ENCODE measurements at regions of chr3 and their contacts with region 1.

Region 1: DNA sequence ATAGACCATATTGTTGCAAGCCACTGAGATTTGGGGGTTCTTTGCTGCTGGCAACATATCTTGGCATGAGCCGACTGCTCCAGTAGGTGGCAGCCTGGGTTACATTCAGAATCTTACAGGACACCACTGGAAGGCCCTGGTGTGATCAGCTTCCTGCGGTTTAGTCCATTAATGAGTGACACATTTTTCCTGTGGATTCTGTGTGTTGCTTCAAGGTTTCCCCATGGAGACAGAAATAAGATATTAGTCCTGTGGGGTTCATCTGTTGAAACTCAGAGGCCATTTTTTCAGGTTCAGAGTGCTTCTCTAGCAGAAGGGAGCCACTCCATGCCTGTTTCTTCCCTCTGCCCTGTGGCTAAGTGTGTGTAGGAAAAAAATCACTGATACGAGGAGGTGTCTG is 116.2 kb downstream of the MFSD1 start:
- DNase-seq: peak; percentile 41 to 67
- H3K4me3 ChIP-seq: no peak overlapping the region
- H3K27ac ChIP-seq: no peak overlapping the region
- H3K4me1 ChIP-seq: no peaks in the 10 kb centered on the region
- H3K27me3 ChIP-seq: no peaks in the 10 kb centered on the region
- CTCF ChIP-seq: peak; percentile 82

Region 2: DNA sequence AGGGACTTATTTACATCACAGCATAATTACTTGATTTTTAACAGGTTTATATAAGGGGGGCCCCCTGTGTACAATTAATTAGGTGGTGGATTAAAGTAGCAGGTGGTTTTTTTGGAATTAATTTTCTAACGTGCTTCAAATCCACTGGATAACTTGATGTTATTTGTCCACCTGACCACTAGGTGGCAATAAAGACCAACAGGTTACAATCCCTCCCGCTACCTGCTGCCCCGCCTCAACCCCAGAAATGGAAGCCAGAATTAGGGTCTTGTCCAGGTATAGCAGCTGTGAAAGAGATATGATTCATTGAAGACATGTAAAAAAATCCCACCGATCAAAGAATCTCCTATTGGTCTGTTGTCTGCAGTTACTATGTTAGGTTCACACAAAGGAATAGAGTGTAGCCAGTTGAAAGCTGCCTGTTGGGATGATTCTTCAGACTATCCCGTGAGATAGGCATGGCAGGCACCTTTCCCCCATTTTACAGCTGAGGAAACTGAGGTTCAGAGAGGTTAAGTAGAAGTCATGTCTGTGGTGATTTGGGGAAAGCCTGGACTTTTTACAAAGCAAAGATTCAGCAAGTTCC is 72.2 kb before region 1 on chr3:
- CTCF ChIA-PET with region 1: no interaction called
- POLR2A ChIA-PET with region 1: no interaction called
- intact Hi-C with region 1: loop called (anchors 1 kb)
- DNase-seq: peak; percentile 43 to 49
- H3K4me3 ChIP-seq: no peak overlapping the region
- H3K27ac ChIP-seq: no peak overlapping the region
- H3K4me1 ChIP-seq: no peaks in the 10 kb centered on the region
- H3K27me3 ChIP-seq: no peaks in the 10 kb centered on the region
- CTCF ChIP-seq: peak; percentile 96

Region 3: DNA sequence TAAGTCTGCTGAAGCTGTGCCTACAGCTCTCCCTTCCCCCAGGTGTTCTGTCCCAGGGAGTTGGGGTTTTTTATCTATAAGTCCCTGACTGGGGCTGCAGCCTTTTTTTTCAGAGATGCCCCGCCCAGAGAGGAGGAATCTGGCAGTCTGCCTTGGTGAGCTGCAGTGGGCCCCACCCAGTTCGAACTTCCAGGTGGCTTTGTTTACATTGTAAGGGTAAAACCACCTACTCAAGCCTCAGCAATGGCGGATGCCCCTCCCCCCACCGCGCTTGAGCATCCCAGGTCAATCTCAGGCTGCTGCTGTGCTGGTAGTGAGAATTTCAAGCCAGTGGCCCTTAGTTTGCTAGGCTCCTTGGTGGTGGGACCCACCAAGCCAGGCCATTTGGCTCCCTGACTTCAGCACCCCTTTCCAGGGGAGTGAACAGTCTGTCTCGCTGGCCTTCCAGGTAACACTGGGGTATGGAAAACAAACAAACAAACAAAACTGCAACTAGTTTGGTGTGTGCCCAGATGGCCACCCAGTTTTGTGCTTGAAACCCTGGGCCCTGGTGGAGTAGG is 73.2 kb after region 1 on chr3:
- CTCF ChIA-PET with region 1: no interaction called
- POLR2A ChIA-PET with region 1: no interaction called
- intact Hi-C with region 1: loop called (anchors 5 kb)
- DNase-seq: peak; percentile 50 to 88
- H3K4me3 ChIP-seq: no peak overlapping the region
- H3K27ac ChIP-seq: no peak overlapping the region
- H3K4me1 ChIP-seq: peaks cover 6% of the 10 kb centered on the region; the same call in 1 of the 2 replicates
- H3K27me3 ChIP-seq: no peaks in the 10 kb centered on the region
- CTCF ChIP-seq: no peak

Region 4: DNA sequence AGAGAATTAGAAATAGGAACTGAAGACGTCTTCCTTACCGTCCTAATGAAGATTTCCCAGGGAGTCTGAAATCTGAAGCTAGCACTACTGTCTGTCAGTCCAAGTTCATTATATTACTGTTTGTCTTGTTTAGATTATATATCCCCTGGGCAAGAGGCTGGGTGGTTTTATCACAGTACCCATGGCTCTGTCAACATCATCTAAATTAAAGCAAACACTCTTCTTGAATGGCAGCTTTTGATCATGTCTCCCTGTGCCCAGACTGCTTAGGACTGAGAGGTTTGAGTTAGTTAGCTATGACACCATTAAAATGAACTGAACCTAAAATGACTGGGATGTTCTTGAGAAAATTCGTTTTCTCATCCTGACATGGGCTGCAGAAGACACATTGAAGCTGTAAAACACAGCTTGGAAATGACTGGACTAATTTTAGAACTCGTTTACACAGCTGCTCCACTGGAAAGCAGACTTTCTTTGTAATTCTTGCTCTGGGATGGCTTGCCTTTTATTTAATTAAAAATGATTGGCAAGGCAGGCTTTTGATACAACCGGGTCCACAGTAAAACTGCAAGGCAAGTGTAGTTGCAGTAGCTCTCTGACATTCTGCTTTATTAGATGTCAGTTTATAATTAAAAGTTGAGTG is 127.4 kb after region 1 on chr3:
- CTCF ChIA-PET with region 1: no interaction called
- POLR2A ChIA-PET with region 1: no interaction called
- intact Hi-C with region 1: no loop called
- DNase-seq: no peak
- H3K4me3 ChIP-seq: no peak overlapping the region
- H3K27ac ChIP-seq: no peak overlapping the region
- H3K4me1 ChIP-seq: no peaks in the 10 kb centered on the region
- H3K27me3 ChIP-seq: no peaks in the 10 kb centered on the region
- CTCF ChIP-seq: no peak

Region 5: GRCh38 chr3:159130108-159130507 is 212.1 kb after region 1 on chr3:
- CTCF ChIA-PET with region 1: no interaction called
- POLR2A ChIA-PET with region 1: no interaction called
- intact Hi-C with region 1: loop called (anchors 10 kb)
- DNase-seq: no peak
- H3K4me3 ChIP-seq: no peak overlapping the region
- H3K27ac ChIP-seq: no peak overlapping the region
- H3K4me1 ChIP-seq: peaks cover 16% of the 10 kb centered on the region
- H3K27me3 ChIP-seq: no peaks in the 10 kb centered on the region
- CTCF ChIP-seq: peak; percentile 33; the same call in 1 of the 2 replicates

Measured in PC-9 (cell line).